Heart right ventricle (tissue), 16 donors: ENCODE measurements at regions of chrX and their contacts with region 1.

Region 1: GRCh38 chrX:47193475-47194193 is at the start of gene UBA1:
- DNase-seq: peak; percentile 87 to 93
- ATAC-seq: peak; percentile 90 to 95 (median 94)
- H3K4me3 ChIP-seq: peak within 1 kb of the TSS; percentile 63 to 99 (median 82)
- H3K27ac ChIP-seq: peak within 1 kb of the TSS; percentile 84 to 98 (median 96)
- H3K4me1 ChIP-seq: peaks cover 2 to 70% (median 43%) of the 10 kb centered on the region in 9 donors
- H3K27me3 ChIP-seq: peaks cover 0 to 28% (median 0%) of the 10 kb centered on the region in 7 donors
- CTCF ChIP-seq: peak; percentile 48 to 90 (median 74)
- total RNA-seq, gene UBA1: 110 to 157 (median 128) TPM

Region 2: GRCh38 chrX:47361538-47362511 is 168.2 kb after region 1 on chrX:
- intact Hi-C with region 1: loop called in 2 of 10 experiments (anchors 5 kb)
- DNase-seq: peak; percentile 67 to 85
- ATAC-seq: peak; percentile 91 to 97 (median 94)
- H3K4me3 ChIP-seq: peak overlapping the region in 9 of 10 donors; percentile 24 to 55 (median 48)
- H3K27ac ChIP-seq: peak overlapping the region in 9 of 10 donors; percentile 39 to 87 (median 75)
- H3K4me1 ChIP-seq: peaks cover 0 to 14% (median 0%) of the 10 kb centered on the region in 9 donors
- H3K27me3 ChIP-seq: peaks cover 0 to 7% (median 0%) of the 10 kb centered on the region in 7 donors
- CTCF ChIP-seq: peak in 1 of 9 donors; percentile 30

Region 3: GRCh38 chrX:47384502-47384901 is 190.9 kb after region 1 on chrX:
- intact Hi-C with region 1: loop called (anchors 1 to 10 kb)
- DNase-seq: peak; percentile 10 to 46
- ATAC-seq: peak in 6 of 8 donors; percentile 29 to 67 (median 52)
- H3K4me3 ChIP-seq: no peak overlapping the region
- H3K27ac ChIP-seq: no peak overlapping the region
- H3K4me1 ChIP-seq: peaks cover 0 to 9% (median 0%) of the 10 kb centered on the region in 9 donors
- H3K27me3 ChIP-seq: peaks cover 0 to 22% (median 0%) of the 10 kb centered on the region in 7 donors
- CTCF ChIP-seq: peak; percentile 43 to 79 (median 72)